ENCODE measurements at regions of chr4 and their contacts with region 1.

Region 1: DNA sequence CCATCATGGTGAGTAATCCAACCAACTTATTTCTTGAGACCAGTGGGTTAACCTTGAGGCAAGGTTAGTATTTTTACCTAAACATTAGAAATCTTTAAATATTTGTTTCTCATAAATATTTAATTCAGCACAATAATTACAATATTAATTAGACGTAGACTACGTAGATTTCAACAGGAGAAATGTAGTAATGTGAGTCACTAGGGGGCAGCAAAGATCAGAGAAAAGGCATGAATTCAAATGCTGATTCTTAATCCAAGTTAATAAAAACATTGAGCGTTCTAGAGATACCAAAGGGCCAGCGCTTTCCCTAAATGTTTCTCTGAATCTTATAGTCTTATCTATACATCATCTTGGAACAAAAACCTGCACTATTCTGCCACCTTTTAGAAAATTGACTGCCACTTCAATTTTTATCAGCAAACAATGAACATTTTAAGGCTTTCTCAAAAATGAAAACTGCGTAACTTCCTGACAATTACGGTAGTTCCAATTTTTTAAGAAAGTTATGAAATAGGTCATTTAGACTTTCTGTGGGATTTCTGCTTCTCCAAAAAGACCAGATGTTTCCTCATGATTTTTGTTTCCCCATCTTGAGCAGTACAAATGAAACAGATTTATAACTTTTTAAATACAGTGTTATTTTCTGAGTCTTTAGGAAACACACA is 180.7 kb downstream of the GASK1B start:
- DNase-seq: peak; percentile 60
- ATAC-seq: no peak
- H3K4me3 ChIP-seq: peak overlapping the region; percentile 30 to 61 (median 50); a peak in 4 of 6 replicates
- H3K27ac ChIP-seq: peak overlapping the region; percentile 76
- H3K4me1 ChIP-seq: peaks cover 51% of the 10 kb centered on the region
- H3K27me3 ChIP-seq: no peaks in the 10 kb centered on the region
- CTCF ChIP-seq: peak; percentile 72
- EP300 ChIP-seq: no peak
- POLR2A ChIP-seq: no peak
- RAD21 ChIP-seq: peak; percentile 76

Region 2: GRCh38 chr4:158020176-158020575 is 28.0 kb after region 1 on chr4:
- CTCF ChIA-PET with region 1: no interaction called
- POLR2A ChIA-PET with region 1: interaction called, 6 read pairs
- in situ Hi-C with region 1: no loop called
- intact Hi-C with region 1: loop called (anchors 1 kb)
- DNase-seq: peak; percentile 92
- ATAC-seq: peak; percentile 100
- H3K4me3 ChIP-seq: no peak overlapping the region; a peak in 1 of 6 replicates
- H3K27ac ChIP-seq: peak overlapping the region; percentile 60
- H3K4me1 ChIP-seq: peaks cover 35% of the 10 kb centered on the region
- H3K27me3 ChIP-seq: no peaks in the 10 kb centered on the region
- CTCF ChIP-seq: no peak
- EP300 ChIP-seq: peak in 1 of 2 experiments; percentile 89; a peak in 2 of 4 replicates
- POLR2A ChIP-seq: no peak
- RAD21 ChIP-seq: no peak

Region 3: GRCh38 chr4:158065176-158065575 is 73.0 kb after region 1 on chr4:
- CTCF ChIA-PET with region 1: no interaction called
- POLR2A ChIA-PET with region 1: no interaction called
- in situ Hi-C with region 1: no loop called
- intact Hi-C with region 1: loop called (anchors 1 kb)
- DNase-seq: peak; percentile 4
- ATAC-seq: peak; percentile 72
- H3K4me3 ChIP-seq: no peak overlapping the region
- H3K27ac ChIP-seq: no peak overlapping the region
- H3K4me1 ChIP-seq: no peaks in the 10 kb centered on the region
- H3K27me3 ChIP-seq: no peaks in the 10 kb centered on the region
- CTCF ChIP-seq: no peak
- EP300 ChIP-seq: no peak
- POLR2A ChIP-seq: no peak
- RAD21 ChIP-seq: no peak

Region 4: DNA sequence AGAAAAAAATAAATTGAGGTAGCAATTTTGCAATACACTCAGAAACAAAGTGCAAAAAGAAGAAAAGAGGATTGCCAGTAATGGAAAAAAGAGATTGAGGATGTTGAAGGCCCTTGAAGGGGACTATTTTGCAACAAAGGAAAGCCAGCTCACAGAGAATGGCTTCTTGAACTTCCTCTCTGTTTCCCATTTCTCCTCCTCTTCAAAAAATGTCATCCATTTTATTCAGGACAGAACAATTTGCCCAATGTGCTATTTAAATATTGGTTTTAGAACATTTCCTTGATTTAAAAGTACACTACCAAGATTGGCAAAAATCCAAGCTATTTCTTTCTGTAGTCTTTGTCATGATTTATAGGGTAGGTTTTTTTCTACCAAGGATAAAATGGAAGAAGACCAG is 120.5 kb after region 1 on chr4:
- CTCF ChIA-PET with region 1: no interaction called
- POLR2A ChIA-PET with region 1: no interaction called
- in situ Hi-C with region 1: no loop called
- intact Hi-C with region 1: loop called (anchors 5 kb)
- DNase-seq: no peak
- ATAC-seq: no peak
- H3K4me3 ChIP-seq: no peak overlapping the region
- H3K27ac ChIP-seq: no peak overlapping the region
- H3K4me1 ChIP-seq: 0 out of 2 replicates have a peak, but pooled peaks cover 7% of the 10 kb centered on the region
- H3K27me3 ChIP-seq: no peaks in the 10 kb centered on the region
- CTCF ChIP-seq: no peak
- EP300 ChIP-seq: no peak
- POLR2A ChIP-seq: no peak
- RAD21 ChIP-seq: no peak

Region 5: GRCh38 chr4:158172261-158173258 is 180.4 kb after region 1 on chr4 and contains the start of gene GASK1B:
- CTCF ChIA-PET with region 1: interaction called, 50 read pairs
- POLR2A ChIA-PET with region 1: interaction called, 25 read pairs
- in situ Hi-C with region 1: loop called (anchors 5 kb)
- intact Hi-C with region 1: loop called (anchors 1 kb)
- DNase-seq: peak; percentile 81
- ATAC-seq: peak; percentile 58
- H3K4me3 ChIP-seq: peak within 1 kb of the TSS; percentile 73 to 87 (median 78)
- H3K27ac ChIP-seq: peak within 1 kb of the TSS; percentile 79
- H3K4me1 ChIP-seq: peaks cover 75% of the 10 kb centered on the region
- H3K27me3 ChIP-seq: no peaks in the 10 kb centered on the region
- CTCF ChIP-seq: peak; percentile 65
- EP300 ChIP-seq: peak in 1 of 2 experiments; percentile 38; a peak in 1 of 4 replicates
- POLR2A ChIP-seq: no peak
- RAD21 ChIP-seq: peak; percentile 34; the same call in 1 of the 2 replicates
- total RNA-seq, gene GASK1B: 40.4 and 50.0 TPM in 2 replicates

Region 6: GRCh38 chr4:158253350-158253980 is 261.3 kb after region 1 on chr4:
- CTCF ChIA-PET with region 1: interaction called, 27 read pairs
- POLR2A ChIA-PET with region 1: no interaction called
- in situ Hi-C with region 1: loop called (anchors 5 kb)
- intact Hi-C with region 1: no loop called
- DNase-seq: peak; percentile 53
- ATAC-seq: peak; percentile 88
- H3K4me3 ChIP-seq: no peak overlapping the region
- H3K27ac ChIP-seq: no peak overlapping the region
- H3K4me1 ChIP-seq: peaks cover 7% of the 10 kb centered on the region
- H3K27me3 ChIP-seq: no peaks in the 10 kb centered on the region
- CTCF ChIP-seq: peak; percentile 74
- EP300 ChIP-seq: no peak
- POLR2A ChIP-seq: no peak
- RAD21 ChIP-seq: 0 out of 2 replicates have a peak, but pooled peaks have one; percentile 30